ENCODE measurements at regions of chr10 and their contacts with region 1.

Region 1: DNA sequence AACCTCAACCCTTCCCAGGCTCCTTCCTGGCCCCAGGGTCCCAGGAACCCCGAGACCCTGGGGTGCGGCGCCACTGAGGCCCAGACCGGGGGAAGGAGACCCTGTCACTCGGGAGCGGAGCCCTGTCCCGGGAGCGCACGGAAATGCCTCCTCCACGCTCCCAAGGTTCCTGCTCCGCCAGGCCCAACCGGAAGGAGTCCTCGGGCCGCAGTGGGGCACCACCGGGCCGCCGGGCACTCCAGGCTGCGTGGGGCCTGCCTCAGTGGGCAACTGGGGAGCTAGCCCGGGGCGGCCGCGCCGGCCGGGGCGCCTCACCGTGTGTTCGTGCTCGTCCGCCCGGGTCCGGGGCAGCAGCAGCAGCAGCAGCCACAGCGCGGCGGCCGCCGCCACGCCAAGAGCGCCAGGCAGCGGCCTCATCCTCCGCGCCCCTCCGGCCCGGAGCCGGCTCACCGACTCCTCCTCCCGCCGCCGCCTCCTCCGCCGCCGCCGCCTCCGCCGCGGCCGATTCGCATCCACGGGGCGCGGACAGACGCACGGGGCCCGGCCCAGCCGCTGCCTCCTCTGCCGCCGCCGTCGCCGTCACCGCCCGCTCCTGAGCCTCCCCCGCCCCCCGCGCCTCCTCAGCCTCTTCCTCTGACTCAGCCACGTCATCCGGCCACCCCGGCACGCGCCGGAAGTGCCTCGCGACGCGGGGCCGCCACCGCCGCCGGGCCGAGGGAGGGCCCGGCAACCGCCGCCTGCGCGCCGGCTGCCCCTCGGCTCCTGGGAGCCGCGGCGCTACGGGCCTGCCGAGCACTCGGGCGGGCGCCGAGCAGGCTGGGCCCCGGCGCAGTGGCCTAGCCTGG is at the start of gene TM9SF3:
- DNase-seq: peak; percentile 55 to 77
- H3K4me3 ChIP-seq: peak within 1 kb of the TSS; percentile 91
- H3K27ac ChIP-seq: peak within 1 kb of the TSS; percentile 75
- H3K4me1 ChIP-seq: peaks cover 30% of the 10 kb centered on the region
- H3K27me3 ChIP-seq: no peaks in the 10 kb centered on the region
- CTCF ChIP-seq: no peak
- total RNA-seq, gene TM9SF3: 72.6 and 75.2 TPM in 2 replicates

Region 2: GRCh38 chr10:96565774-96566173 is 20.9 kb before region 1 on chr10:
- CTCF ChIA-PET with region 1: no interaction called
- POLR2A ChIA-PET with region 1: no interaction called
- intact Hi-C with region 1: no loop called
- DNase-seq: no peak
- H3K4me3 ChIP-seq: no peak overlapping the region
- H3K27ac ChIP-seq: no peak overlapping the region
- H3K4me1 ChIP-seq: no peaks in the 10 kb centered on the region
- H3K27me3 ChIP-seq: no peaks in the 10 kb centered on the region
- CTCF ChIP-seq: no peak

Region 3: DNA sequence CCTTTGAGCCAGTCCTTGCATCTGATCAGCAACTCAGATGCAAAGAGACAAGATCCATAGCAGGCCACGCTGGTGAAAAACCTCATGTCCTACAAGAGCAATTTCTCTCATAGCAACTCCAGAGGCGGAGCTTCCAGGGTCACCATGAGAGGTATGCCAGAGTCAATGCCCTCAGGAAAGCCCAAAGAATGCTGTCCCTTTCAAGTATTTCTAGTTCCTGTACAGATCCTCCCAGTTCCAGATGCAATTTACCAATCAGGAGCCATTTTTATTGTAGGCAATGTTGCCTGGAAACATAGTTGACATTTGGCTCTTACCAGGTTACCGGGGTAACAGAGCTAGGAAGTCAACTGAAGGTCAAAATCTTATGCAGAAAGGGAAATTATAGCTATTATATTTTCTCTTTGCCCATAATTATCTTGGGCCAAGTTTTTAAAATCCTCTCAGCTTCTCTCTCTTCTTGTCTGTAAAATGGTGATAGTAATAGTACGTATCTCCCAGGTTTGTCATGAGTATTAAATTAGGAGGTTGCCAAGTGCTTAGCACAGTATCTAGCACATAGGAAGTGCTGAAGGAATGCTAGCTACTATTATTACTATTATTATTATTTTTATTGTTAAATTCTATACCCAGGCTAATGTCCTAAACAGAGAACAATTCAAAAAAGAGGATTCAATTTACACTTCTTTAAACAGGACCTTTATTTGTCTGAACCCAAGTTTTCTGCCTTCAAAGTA is 46.5 kb after region 1 on chr10:
- CTCF ChIA-PET with region 1: no interaction called
- POLR2A ChIA-PET with region 1: no interaction called
- intact Hi-C with region 1: loop called (anchors 5 kb)
- DNase-seq: peak; percentile 57 to 87
- H3K4me3 ChIP-seq: no peak overlapping the region
- H3K27ac ChIP-seq: no peak overlapping the region
- H3K4me1 ChIP-seq: peaks cover 5% of the 10 kb centered on the region
- H3K27me3 ChIP-seq: no peaks in the 10 kb centered on the region
- CTCF ChIP-seq: no peak

Region 4: GRCh38 chr10:96683065-96683464 is 96.4 kb after region 1 on chr10:
- CTCF ChIA-PET with region 1: no interaction called
- POLR2A ChIA-PET with region 1: no interaction called
- intact Hi-C with region 1: no loop called
- DNase-seq: peak in 1 of 2 experiments; percentile 35
- H3K4me3 ChIP-seq: no peak overlapping the region
- H3K27ac ChIP-seq: no peak overlapping the region
- H3K4me1 ChIP-seq: no peaks in the 10 kb centered on the region
- H3K27me3 ChIP-seq: no peaks in the 10 kb centered on the region
- CTCF ChIP-seq: no peak

Region 5: DNA sequence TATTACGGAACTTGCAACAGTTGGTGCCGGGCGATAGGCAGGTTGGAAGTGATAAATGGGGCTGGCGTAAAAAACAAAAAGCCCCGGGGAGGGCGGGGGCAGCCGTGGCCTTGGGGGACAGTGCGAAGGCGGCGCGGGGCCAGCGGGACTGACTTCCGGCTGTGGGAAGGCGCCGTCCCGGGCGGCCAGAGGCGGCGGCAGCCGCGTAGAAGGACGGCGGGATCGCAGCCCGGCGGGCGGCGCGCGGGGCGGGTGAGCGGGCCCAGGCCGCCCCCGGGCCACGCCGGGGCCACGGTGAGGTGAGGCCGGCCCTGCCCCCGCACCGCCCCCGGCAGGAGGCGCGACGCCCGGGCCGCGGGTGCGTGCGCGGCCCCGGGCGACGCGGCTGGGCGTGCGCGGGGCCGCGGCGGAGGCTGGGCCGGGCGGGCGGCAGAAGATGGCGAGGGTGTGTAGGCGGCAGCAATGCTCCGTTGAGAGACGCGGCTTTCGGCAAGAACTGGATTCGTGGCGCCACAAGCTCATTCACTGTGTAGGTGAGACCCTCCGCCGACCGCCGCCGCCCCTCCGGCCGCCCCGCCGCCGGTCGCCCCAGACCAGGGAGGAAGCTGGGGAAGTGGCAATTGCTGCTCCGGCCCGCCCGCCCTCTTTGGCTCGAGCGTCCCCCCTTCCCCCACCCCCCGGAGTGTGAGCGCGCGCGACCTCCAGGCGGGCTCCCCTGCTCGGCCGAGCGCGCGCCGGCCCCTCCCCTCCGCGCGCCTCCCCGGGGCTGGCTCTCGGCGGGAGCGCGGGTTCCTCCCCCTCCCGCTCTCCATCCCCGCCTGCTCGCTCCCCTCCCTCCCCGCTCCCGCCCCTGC is 245.5 kb after region 1 on chr10 and contains the start of gene LCOR:
- CTCF ChIA-PET with region 1: no interaction called
- POLR2A ChIA-PET with region 1: no interaction called
- intact Hi-C with region 1: loop called (anchors 5 kb)
- DNase-seq: peak; percentile 65 to 79
- H3K4me3 ChIP-seq: peak within 1 kb of the TSS; percentile 75
- H3K27ac ChIP-seq: peak within 1 kb of the TSS; percentile 87
- H3K4me1 ChIP-seq: peaks cover 18% of the 10 kb centered on the region
- H3K27me3 ChIP-seq: no peaks in the 10 kb centered on the region
- CTCF ChIP-seq: no peak
- total RNA-seq, gene LCOR: 28.1 and 36.4 TPM in 2 replicates

Measured in PC-9 (cell line).